ENCODE measurements at regions of chr10 and their contacts with region 1.

Region 1: DNA sequence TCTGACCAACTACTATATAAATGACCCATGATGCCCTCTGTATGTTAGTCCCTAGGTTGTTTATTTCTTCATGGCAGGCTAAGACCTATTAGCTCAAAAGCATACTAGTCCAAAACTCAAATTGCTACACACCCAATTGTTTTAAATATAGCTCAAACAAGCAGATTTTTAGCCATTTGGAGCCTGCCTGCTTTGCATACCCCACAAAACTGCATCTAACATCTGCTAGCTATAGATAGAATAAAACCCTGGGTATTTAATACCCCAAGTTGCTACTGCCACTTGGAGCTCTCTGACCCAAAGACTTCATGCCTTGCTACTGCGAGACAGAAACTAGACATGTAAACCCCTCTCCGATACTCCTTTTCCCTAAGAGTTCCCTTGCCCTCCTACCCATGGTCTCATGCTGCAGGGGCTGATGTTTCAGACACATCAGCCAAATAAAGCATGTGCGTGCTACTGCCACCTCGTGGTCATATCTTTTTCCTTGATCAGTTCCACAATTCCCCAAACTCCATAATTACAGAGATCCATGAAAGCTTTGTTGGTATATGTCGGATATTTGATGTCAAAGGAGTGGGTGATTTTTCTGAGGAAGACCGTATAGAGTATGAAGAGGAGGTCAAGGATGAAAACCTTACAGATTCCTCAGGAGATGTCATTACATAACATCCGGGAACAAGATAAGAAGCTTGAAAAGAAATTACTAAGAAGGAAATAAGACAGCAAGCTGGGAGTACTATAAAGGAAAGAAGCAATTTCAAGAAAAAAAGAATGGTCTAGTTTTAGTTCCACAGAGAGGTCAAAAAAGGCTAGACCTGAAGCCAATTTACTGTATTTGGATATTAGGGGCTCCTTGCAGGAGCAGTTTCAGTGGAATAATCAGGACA is 386.6 kb downstream of the SH2D4B start:
- DNase-seq: peak in 2 of 3 donors; percentile 21 to 43
- ATAC-seq: peak in 1 of 2 donors; percentile 59
- H3K4me3 ChIP-seq: no peak overlapping the region
- H3K27ac ChIP-seq: no peak overlapping the region
- H3K4me1 ChIP-seq: no peaks in the 10 kb centered on the region
- H3K27me3 ChIP-seq: peaks cover 7% of the 10 kb centered on the region

Region 2: DNA sequence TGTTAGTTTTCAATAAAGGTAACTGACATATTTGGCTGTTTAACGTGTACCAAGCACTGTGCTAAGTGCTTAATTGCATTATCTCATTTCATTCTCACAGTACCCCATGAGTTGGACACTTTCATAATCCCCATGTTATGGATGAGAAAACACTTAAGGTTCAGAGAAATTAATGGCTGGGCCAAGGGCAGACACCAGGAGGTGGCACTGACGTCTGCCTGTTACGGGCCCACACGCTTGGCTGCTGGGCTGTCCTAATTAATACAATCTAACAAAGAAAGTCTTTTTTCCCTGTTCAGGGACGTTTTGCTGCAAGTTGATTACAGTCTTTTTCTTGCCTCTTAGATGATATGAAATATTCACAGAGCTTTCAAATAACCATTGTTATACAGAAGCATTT is 551.6 kb before region 1 on chr10:
- intact Hi-C with region 1: loop called in 1 of 4 experiments (anchors 10 kb)
- DNase-seq: no peak
- ATAC-seq: no peak
- H3K4me3 ChIP-seq: no peak overlapping the region
- H3K27ac ChIP-seq: no peak overlapping the region
- H3K4me1 ChIP-seq: no peaks in the 10 kb centered on the region
- H3K27me3 ChIP-seq: no peaks in the 10 kb centered on the region

Region 3: DNA sequence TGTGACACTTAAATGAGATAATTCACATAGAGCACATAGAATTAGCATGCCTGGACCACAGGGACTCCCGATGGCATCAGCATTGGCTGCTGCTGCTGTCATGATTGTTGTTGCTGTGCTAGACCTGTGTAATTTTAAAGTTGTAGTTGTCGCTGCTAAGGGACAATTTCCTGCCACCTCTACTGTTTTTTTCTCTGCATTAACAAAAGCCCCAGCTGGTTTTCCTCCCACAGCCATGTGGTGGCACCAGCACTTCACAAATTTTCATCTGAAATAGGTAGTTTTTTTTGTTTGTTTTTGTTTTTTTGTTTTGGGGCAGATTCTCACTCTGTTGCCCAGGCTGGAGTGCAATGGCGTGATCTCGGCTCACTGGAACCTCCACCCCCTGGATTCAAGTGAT is 541.3 kb before region 1 on chr10:
- intact Hi-C with region 1: loop called in 3 of 4 experiments (anchors 10 kb)
- DNase-seq: peak in 1 of 3 donors; percentile 52
- ATAC-seq: no peak
- H3K4me3 ChIP-seq: no peak overlapping the region
- H3K27ac ChIP-seq: no peak overlapping the region
- H3K4me1 ChIP-seq: no peaks in the 10 kb centered on the region
- H3K27me3 ChIP-seq: no peaks in the 10 kb centered on the region

Region 4: DNA sequence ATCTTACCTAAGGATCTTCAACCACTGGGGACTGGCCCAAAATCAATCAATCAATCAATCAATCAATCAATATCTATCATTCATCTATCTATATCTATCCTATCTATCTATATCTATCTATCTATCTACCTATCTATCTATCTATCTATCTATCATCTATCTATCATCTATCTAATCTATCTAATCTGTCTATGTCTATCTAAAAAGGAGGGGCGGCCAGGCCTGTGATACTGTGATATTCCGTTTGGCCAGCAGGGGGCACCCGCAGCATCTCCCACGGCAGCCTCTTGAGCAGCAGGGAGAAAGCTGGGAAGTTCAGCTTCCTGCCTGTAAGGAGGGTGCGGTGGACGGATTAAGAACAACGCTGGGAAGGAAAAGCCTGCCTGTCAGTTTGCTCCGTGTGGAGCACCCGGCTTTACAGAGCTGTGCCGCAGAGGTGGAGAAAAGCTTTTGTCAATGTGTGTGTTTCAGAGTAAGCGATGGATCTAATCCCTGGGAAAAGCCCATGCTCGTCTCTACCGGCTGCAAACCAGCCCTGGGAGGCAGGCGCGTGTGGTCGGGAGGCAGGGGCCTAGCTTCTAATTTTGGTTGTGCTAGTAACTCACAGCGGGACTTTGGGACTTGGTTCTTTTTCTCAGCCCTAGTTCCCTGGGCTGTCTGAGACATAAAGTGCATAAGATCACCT is 261.6 kb before region 1 on chr10:
- intact Hi-C with region 1: loop called in 1 of 4 experiments (anchors 10 kb)
- DNase-seq: peak; percentile 82 to 92 (median 91)
- ATAC-seq: peak; percentile 89 to 90
- H3K4me3 ChIP-seq: peak overlapping the region; percentile 5
- H3K27ac ChIP-seq: peak overlapping the region; percentile 37
- H3K4me1 ChIP-seq: no peaks in the 10 kb centered on the region
- H3K27me3 ChIP-seq: no peaks in the 10 kb centered on the region

Region 5: GRCh38 chr10:80699602-80700039 is 224.7 kb before region 1 on chr10:
- intact Hi-C with region 1: loop called in 2 of 4 experiments (anchors 10 kb)
- DNase-seq: peak; percentile 81 to 92 (median 90)
- ATAC-seq: peak; percentile 82 to 87
- H3K4me3 ChIP-seq: no peak overlapping the region
- H3K27ac ChIP-seq: no peak overlapping the region
- H3K4me1 ChIP-seq: no peaks in the 10 kb centered on the region
- H3K27me3 ChIP-seq: no peaks in the 10 kb centered on the region

Region 6: DNA sequence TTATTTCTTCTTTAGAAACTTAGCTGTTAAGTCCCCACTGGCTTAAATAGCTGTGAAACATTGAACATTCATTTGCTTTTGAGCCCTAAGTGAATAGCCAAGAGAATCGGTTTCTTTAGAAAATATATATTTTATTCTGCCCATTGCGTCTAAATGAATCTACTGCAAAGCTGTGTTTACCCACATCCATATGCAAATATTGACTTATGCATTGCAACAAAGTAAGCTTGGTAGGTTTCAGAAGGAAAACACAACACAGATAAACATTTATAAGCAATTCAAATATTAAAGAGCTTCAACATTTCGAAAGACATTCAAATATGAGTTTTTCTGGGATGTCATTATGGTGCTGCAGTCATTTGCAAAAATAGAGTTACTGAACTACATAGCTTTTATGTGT is 129.3 kb before region 1 on chr10:
- intact Hi-C with region 1: no loop called
- DNase-seq: no peak
- ATAC-seq: no peak
- H3K4me3 ChIP-seq: no peak overlapping the region
- H3K27ac ChIP-seq: no peak overlapping the region
- H3K4me1 ChIP-seq: no peaks in the 10 kb centered on the region
- H3K27me3 ChIP-seq: no peaks in the 10 kb centered on the region

Region 7: DNA sequence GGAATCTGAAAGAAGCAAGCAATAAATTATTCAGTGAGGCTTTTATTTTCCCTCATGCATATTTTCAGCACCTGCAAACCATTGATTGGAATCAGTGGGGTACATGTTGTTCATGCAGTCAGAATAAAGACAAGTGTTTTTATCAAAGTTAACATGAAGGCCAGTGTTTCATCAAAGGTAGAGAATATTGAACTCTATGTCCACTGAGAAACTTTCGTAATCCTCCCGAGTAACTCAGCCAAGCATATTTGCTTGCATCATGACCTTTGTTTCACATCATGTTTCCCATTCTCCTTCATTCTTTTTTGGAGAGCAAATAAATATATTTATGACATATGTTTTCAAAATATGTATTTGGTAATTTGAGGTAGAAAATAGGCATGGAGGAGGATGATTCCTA is 276.5 kb after region 1 on chr10:
- intact Hi-C with region 1: no loop called
- DNase-seq: no peak
- ATAC-seq: no peak
- H3K4me3 ChIP-seq: no peak overlapping the region
- H3K27ac ChIP-seq: no peak overlapping the region
- H3K4me1 ChIP-seq: no peaks in the 10 kb centered on the region
- H3K27me3 ChIP-seq: no peaks in the 10 kb centered on the region

Measured in right cardiac atrium (tissue), 5 donors.